Heart left ventricle (tissue), 16 donors: ENCODE measurements at regions of chr4 and their contacts with region 1.

Region 1: GRCh38 chr4:56424697-56425514 is 10.5 kb downstream of the PPAT start:
- DNase-seq: no peak
- ATAC-seq: peak in 2 of 4 donors; percentile 50 to 65
- H3K4me3 ChIP-seq: peak overlapping the region in 8 of 12 donors; percentile 0 to 39 (median 28)
- H3K27ac ChIP-seq: no peak overlapping the region
- H3K4me1 ChIP-seq: peaks cover 0 to 3% (median 0%) of the 10 kb centered on the region in 12 donors
- H3K27me3 ChIP-seq: no peaks in the 10 kb centered on the region
- CTCF ChIP-seq: peak; percentile 47 to 78 (median 64)
- POLR2A ChIP-seq: no peak

Region 2: DNA sequence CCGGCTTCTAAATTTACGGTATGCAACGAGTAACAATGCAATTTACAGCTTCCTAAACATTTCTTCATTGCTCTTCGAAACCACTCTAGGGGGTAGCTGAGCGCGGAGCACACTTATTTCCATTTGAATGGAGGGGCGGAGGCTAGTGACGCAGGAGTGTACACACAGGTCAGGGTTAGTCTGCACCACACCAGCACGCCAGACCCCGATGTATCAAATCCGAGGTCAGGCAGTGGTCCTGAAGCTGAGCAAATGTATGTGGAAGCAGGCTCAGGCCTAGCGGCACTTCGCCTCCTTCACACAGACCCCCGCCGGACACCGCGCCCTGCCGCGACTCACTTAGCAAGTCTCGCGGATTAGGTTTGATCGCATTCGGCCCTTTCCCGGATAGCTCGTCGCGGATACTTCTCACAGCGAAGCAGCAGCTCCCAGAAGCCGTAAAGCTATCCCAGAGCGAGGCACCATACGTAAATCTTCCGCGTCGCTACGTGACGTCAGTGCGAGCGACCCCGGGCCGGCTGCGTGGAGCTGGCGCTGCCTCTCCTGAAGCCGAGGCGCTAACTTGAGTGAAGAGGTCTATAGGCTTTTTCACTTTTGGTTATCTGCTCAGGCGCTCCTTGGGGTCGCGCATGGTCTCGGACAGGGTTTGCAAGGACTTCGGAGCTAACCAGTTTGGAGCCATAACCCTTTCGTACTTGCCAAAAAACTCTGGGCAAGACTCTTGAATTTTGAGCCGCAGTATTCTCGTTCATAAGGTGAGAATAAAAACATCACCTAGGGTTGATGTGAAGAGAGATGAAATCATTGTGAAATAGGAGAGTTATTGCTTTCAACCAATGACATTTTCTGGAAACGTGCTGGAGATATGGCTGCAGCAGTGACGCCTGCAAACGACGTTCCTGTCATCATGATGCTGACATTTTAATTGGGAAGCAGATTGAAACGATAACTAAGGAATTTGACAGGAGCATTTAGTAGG is 37.6 kb before region 1 on chr4 and contains the start of gene AASDH:
- intact Hi-C with region 1: loop called in 1 of 10 experiments (anchors 1 kb)
- DNase-seq: peak; percentile 91 to 95 (median 94)
- ATAC-seq: peak; percentile 97 to 98 (median 98)
- H3K4me3 ChIP-seq: peak within 1 kb of the TSS; percentile 51 to 90 (median 78)
- H3K27ac ChIP-seq: peak within 1 kb of the TSS; percentile 85 to 99 (median 96)
- H3K4me1 ChIP-seq: peaks cover 0 to 26% (median 15%) of the 10 kb centered on the region in 12 donors
- H3K27me3 ChIP-seq: no peaks in the 10 kb centered on the region
- CTCF ChIP-seq: no peak
- POLR2A ChIP-seq: peak in 1 of 2 donors; percentile 74
- total RNA-seq, gene AASDH: 3.1 to 11.7 (median 5.3) TPM

Region 3: GRCh38 chr4:56467284-56468096 is 42.6 kb after region 1 on chr4 and contains the start of gene SRP72:
- intact Hi-C with region 1: loop called in 2 of 10 experiments (anchors 5 kb)
- DNase-seq: peak; percentile 89 to 92 (median 91)
- ATAC-seq: peak; percentile 97 to 99 (median 98)
- H3K4me3 ChIP-seq: peak within 1 kb of the TSS; percentile 66 to 97 (median 90)
- H3K27ac ChIP-seq: peak within 1 kb of the TSS; percentile 74 to 92 (median 87)
- H3K4me1 ChIP-seq: peaks cover 3 to 54% (median 35%) of the 10 kb centered on the region in 12 donors
- H3K27me3 ChIP-seq: no peaks in the 10 kb centered on the region
- CTCF ChIP-seq: peak in 1 of 12 donors; percentile 14
- POLR2A ChIP-seq: peak in 1 of 2 donors; percentile 51
- total RNA-seq, gene SRP72: 35.1 to 66.8 (median 41.7) TPM

Region 4: GRCh38 chr4:56544573-56545131 is 119.7 kb after region 1 on chr4:
- intact Hi-C with region 1: loop called in 6 of 10 experiments (anchors 2 to 10 kb)
- DNase-seq: peak; percentile 79 to 92 (median 85)
- ATAC-seq: peak; percentile 85 to 99 (median 99)
- H3K4me3 ChIP-seq: peak overlapping the region in 10 of 12 donors; percentile 12 to 53 (median 41)
- H3K27ac ChIP-seq: no peak overlapping the region
- H3K4me1 ChIP-seq: peaks cover 0 to 7% (median 0%) of the 10 kb centered on the region in 12 donors
- H3K27me3 ChIP-seq: peaks cover 0 to 16% (median 0%) of the 10 kb centered on the region in 9 donors
- CTCF ChIP-seq: peak; percentile 96 to 100 (median 98)
- POLR2A ChIP-seq: no peak

Region 5: GRCh38 chr4:56828784-56829535 is 404.1 kb after region 1 on chr4:
- intact Hi-C with region 1: loop called in 4 of 10 experiments (anchors 10 kb)
- DNase-seq: no peak
- ATAC-seq: no peak
- H3K4me3 ChIP-seq: no peak overlapping the region
- H3K27ac ChIP-seq: no peak overlapping the region
- H3K4me1 ChIP-seq: no peaks in the 10 kb centered on the region
- H3K27me3 ChIP-seq: peaks cover 0 to 2% (median 0%) of the 10 kb centered on the region in 9 donors
- CTCF ChIP-seq: no peak
- POLR2A ChIP-seq: no peak

Region 6: DNA sequence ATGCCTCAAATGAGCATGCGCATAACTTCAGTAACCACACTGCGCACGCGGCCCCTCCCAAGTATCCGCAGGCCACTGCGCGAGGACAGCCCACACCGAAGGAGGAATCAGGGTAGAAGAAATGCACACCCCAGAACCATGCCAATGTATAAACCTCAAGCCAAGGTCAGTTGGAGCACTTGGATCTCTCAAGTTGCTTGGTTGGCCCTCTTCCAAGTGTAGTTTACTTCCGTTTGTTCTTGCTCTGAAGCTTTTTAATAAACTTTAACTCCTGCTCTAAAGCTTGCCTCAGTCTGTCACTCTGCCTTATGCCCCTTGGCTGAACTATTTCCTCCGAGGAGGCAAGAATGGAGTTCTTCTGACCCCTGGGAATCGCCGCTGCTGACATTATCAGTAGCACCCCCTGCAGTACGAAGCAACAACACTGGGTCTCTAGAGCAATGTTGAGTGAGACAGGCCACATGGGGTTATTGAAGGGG is 418.6 kb after region 1 on chr4:
- intact Hi-C with region 1: loop called in 7 of 10 experiments (anchors 5 to 10 kb)
- DNase-seq: no peak
- ATAC-seq: no peak
- H3K4me3 ChIP-seq: no peak overlapping the region
- H3K27ac ChIP-seq: no peak overlapping the region
- H3K4me1 ChIP-seq: no peaks in the 10 kb centered on the region
- H3K27me3 ChIP-seq: no peaks in the 10 kb centered on the region
- CTCF ChIP-seq: no peak
- POLR2A ChIP-seq: no peak